GM10248 (cell line): ENCODE measurements at regions of chr10 and their contacts with region 1.

Region 1: GRCh38 chr10:15168781-15169554 is 475 bp upstream of the NMT2 start:
- DNase-seq: peak; percentile 99
- CTCF ChIP-seq: no peak

Region 2: DNA sequence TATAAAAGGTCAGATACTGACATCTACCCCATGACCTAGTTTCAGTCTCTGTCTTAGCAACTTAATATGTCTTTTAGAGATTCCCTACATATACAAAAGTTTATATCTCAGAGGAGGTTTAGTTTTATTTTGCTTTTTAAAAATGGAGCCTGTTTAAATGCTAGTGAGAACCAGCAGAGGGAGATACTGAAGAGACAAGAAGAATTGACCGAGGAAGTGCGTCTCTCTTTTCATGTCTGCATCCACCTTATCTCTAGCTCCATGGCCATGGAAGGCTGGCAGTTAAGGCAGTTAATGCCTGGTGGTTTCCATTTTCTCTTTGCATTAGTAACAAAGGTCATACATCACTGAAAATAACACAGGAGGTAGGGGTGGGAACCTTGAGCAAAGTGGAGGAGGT is 279.6 kb before region 1 on chr10:
- CTCF ChIA-PET with region 1: no interaction called
- POLR2A ChIA-PET with region 1: no interaction called
- DNase-seq: peak; percentile 22
- CTCF ChIP-seq: peak; percentile 3

Region 3: GRCh38 chr10:15053061-15053460 is 115.9 kb before region 1 on chr10:
- CTCF ChIA-PET with region 1: no interaction called
- POLR2A ChIA-PET with region 1: no interaction called
- DNase-seq: no peak
- CTCF ChIP-seq: no peak

Region 4: GRCh38 chr10:15141136-15142054 is 27.6 kb before region 1 on chr10:
- CTCF ChIA-PET with region 1: interaction called, 13 read pairs
- POLR2A ChIA-PET with region 1: no interaction called
- DNase-seq: peak; percentile 61
- CTCF ChIP-seq: no peak

Region 5: GRCh38 chr10:15150563-15150962 is 18.4 kb before region 1 on chr10:
- CTCF ChIA-PET with region 1: interaction called, 23 read pairs
- POLR2A ChIA-PET with region 1: no interaction called
- DNase-seq: no peak
- CTCF ChIP-seq: no peak

Region 6: GRCh38 chr10:15182540-15183207 is 13.7 kb after region 1 on chr10:
- CTCF ChIA-PET with region 1: interaction called, 12 read pairs
- POLR2A ChIA-PET with region 1: no interaction called
- DNase-seq: no peak
- CTCF ChIP-seq: no peak